AG04449 (cell line): ENCODE measurements at regions of chr9 and their contacts with region 1.

Region 1: GRCh38 chr9:112028280-112029221 is 131.9 kb downstream of the UGCG start:
- DNase-seq: no peak
- H3K4me3 ChIP-seq: no peak overlapping the region
- CTCF ChIP-seq: no peak

Region 2: GRCh38 chr9:111957856-111958652 is 70.5 kb before region 1 on chr9:
- CTCF ChIA-PET with region 1: no interaction called
- POLR2A ChIA-PET with region 1: interaction called, 10 read pairs
- DNase-seq: peak; percentile 99
- H3K4me3 ChIP-seq: peak overlapping the region; percentile 47
- CTCF ChIP-seq: no peak

Region 3: GRCh38 chr9:112050544-112051475 is 22.3 kb after region 1 on chr9:
- CTCF ChIA-PET with region 1: no interaction called
- POLR2A ChIA-PET with region 1: interaction called, 11 read pairs
- DNase-seq: peak; percentile 93
- H3K4me3 ChIP-seq: no peak overlapping the region
- CTCF ChIP-seq: no peak

Region 4: DNA sequence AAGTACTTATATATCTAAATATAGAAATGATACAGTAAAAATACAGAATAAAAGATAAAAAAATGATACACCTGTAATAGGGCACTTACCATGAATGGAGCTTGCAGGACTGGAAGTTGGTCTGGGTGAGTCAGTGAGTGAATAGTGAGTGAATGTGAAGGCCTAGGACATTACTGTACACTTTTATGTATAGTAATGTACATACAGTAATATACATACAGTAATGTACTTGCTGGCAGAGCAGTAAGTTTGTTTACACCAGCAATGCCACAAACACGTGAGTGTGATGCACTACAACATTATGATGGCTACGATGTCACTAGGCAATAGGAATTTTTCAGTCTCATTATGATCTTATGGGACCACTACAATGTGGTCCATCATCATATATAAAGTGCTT is 112.4 kb after region 1 on chr9:
- CTCF ChIA-PET with region 1: no interaction called
- POLR2A ChIA-PET with region 1: no interaction called
- DNase-seq: no peak
- H3K4me3 ChIP-seq: no peak overlapping the region
- CTCF ChIP-seq: no peak